GM12878 (cell line): ENCODE measurements at regions of chr9 and their contacts with region 1.

Region 1: DNA sequence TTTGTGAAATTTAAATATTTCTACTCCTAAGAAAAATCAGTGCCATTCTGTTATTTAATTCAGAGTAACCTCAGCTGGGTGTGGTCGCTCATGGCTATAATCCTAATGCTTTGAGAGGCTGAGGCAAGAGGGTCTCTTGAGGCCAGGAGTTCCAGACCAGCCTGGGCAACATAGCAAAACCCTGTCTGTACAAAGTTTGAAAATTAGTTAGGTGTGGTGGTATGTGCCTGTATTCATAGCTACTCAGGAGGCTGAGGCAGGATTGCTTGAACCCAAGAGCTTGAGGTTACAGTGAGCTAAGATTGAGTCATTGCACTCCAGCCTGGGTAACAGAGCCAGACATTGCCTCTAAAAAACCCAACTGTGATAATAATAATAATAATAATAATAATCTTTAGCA is 44.8 kb upstream of the CNTLN start:
- DNase-seq: no peak
- ATAC-seq: no peak
- H3K4me3 ChIP-seq: no peak overlapping the region
- H3K27ac ChIP-seq: no peak overlapping the region
- H3K4me1 ChIP-seq: no peaks in the 10 kb centered on the region
- H3K27me3 ChIP-seq: no peaks in the 10 kb centered on the region
- CTCF ChIP-seq: no peak
- EP300 ChIP-seq: no peak
- POLR2A ChIP-seq: no peak
- RAD21 ChIP-seq: no peak

Region 2: GRCh38 chr9:17045381-17045940 is 44.6 kb before region 1 on chr9:
- CTCF ChIA-PET with region 1: no interaction called
- POLR2A ChIA-PET with region 1: no interaction called
- RAD21 ChIA-PET with region 1: no interaction called
- SMC1A ChIA-PET with region 1: no interaction called
- in situ Hi-C with region 1: loop called (anchors 5 kb)
- intact Hi-C with region 1: no loop called
- DNase-seq: no peak
- ATAC-seq: no peak
- H3K4me3 ChIP-seq: no peak overlapping the region
- H3K27ac ChIP-seq: no peak overlapping the region
- H3K4me1 ChIP-seq: no peaks in the 10 kb centered on the region
- H3K27me3 ChIP-seq: no peaks in the 10 kb centered on the region
- CTCF ChIP-seq: no peak
- EP300 ChIP-seq: no peak
- POLR2A ChIP-seq: no peak
- RAD21 ChIP-seq: no peak